Activated CD4-positive, alpha-beta T cell treated with anti-CD3 and anti-CD28 coated beads for 36 hours (primary cell): ENCODE measurements at regions of chr2 and their contacts with region 1.

Region 1: GRCh38 chr2:11477994-11478393 is 12.0 kb upstream of the E2F6 start:
- DNase-seq: peak; percentile 93
- ATAC-seq: peak; percentile 68
- H3K4me3 Mint-ChIP-seq: no peak overlapping the region
- H3K27ac Mint-ChIP-seq: no peak overlapping the region
- H3K4me1 Mint-ChIP-seq: peaks cover under 1% of the 10 kb centered on the region
- H3K27me3 Mint-ChIP-seq: peaks cover 27% of the 10 kb centered on the region

Region 2: DNA sequence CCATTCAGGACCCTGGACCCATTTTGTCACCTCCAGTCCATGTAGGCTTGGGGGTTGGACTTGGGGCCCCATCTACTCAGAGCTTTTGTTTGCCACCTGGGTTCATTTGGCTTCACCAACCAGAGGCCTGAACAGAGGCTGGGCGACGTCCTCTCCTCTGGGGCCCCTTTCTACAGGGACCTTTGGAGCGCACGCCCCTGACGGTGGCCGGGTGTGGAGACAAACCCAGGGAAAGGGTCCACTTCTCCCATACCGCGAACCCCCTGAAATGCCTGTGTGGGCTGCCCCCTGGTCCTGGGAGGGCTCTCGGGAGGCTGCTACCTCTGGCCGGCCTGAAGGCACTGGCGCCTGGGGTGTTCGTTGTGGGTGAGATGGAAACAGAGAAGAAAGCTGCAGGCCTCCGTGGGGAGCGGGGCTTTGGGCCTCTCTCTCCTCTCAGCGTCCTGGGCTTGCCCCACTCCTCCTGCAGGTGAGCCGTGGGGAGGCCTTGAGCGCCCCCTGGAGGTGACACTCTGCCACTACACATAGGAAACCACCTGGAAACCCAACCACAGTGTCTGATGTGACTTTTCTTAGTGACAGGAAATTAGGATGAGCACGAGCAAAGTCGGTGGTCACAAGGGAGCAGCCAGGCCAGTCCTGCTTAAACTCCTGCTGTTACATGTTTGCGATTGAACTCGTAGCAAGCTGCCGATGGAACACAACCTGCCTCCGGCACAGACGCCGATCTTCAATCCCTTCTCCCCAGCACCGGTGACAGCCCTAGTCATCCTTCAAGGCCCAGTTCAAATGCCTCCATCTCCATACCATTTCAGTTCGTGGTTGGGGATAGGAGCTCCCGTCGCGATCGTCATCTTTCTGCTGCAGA is 204.0 kb after region 1 on chr2:
- CTCF ChIA-PET with region 1: interaction called, 4 read pairs
- POLR2A ChIA-PET with region 1: no interaction called
- intact Hi-C with region 1: loop called (anchors 1 to 5 kb)
- DNase-seq: peak; percentile 80
- ATAC-seq: peak; percentile 91
- H3K4me3 Mint-ChIP-seq: no peak overlapping the region
- H3K27ac Mint-ChIP-seq: no peak overlapping the region
- H3K4me1 Mint-ChIP-seq: peaks cover 4% of the 10 kb centered on the region
- H3K27me3 Mint-ChIP-seq: peaks cover 10% of the 10 kb centered on the region

Region 3: GRCh38 chr2:12192762-12193161 is 714.8 kb after region 1 on chr2:
- CTCF ChIA-PET with region 1: no interaction called
- POLR2A ChIA-PET with region 1: no interaction called
- intact Hi-C with region 1: no loop called
- DNase-seq: peak; percentile 18
- ATAC-seq: peak; percentile 42
- H3K4me3 Mint-ChIP-seq: no peak overlapping the region
- H3K27ac Mint-ChIP-seq: peak overlapping the region; percentile 33
- H3K4me1 Mint-ChIP-seq: peaks cover 13% of the 10 kb centered on the region
- H3K27me3 Mint-ChIP-seq: no peaks in the 10 kb centered on the region